ENCODE measurements at regions of chr14 and their contacts with region 1.

Region 1: GRCh38 chr14:35261774-35262173 is 30.4 kb upstream of the PSMA6 start:
- DNase-seq: no peak
- ATAC-seq: peak; percentile 36
- H3K4me3 Mint-ChIP-seq: no peak overlapping the region
- H3K27ac Mint-ChIP-seq: no peak overlapping the region
- H3K4me1 Mint-ChIP-seq: peaks cover 5% of the 10 kb centered on the region
- H3K27me3 Mint-ChIP-seq: no peaks in the 10 kb centered on the region

Region 2: DNA sequence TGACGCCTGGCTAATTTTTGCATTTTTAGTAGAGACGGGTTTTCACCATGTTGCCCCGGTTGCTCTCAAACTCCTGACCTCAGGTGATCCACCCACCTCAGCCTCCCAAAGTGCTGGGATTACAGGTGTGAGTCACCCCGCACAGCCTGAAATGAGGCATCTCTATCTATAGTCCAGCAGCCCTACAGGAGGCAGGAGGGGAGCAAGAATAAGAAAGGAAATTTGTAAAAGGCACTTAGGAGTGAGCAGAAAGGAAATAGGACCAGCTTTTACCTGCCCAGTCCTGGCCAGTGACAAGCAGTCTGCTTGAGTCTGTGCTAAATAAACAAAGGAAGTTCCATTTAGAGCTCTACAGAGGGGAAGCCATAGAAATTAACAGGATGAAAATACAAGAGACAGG is 15.4 kb after region 1 on chr14:
- CTCF ChIA-PET with region 1: interaction called, 4 read pairs
- POLR2A ChIA-PET with region 1: interaction called, 10 read pairs
- intact Hi-C with region 1: no loop called
- DNase-seq: no peak
- ATAC-seq: no peak
- H3K4me3 Mint-ChIP-seq: no peak overlapping the region
- H3K27ac Mint-ChIP-seq: no peak overlapping the region
- H3K4me1 Mint-ChIP-seq: peaks cover 7% of the 10 kb centered on the region
- H3K27me3 Mint-ChIP-seq: no peaks in the 10 kb centered on the region

Region 3: GRCh38 chr14:35341446-35342159 is 79.8 kb after region 1 on chr14:
- CTCF ChIA-PET with region 1: no interaction called
- POLR2A ChIA-PET with region 1: no interaction called
- intact Hi-C with region 1: no loop called
- DNase-seq: peak; percentile 41
- ATAC-seq: peak; percentile 54
- H3K4me3 Mint-ChIP-seq: no peak overlapping the region
- H3K27ac Mint-ChIP-seq: no peak overlapping the region
- H3K4me1 Mint-ChIP-seq: peaks cover 6% of the 10 kb centered on the region
- H3K27me3 Mint-ChIP-seq: no peaks in the 10 kb centered on the region

Region 4: GRCh38 chr14:35480128-35480769 is 218.5 kb after region 1 on chr14:
- CTCF ChIA-PET with region 1: no interaction called
- POLR2A ChIA-PET with region 1: no interaction called
- intact Hi-C with region 1: no loop called
- DNase-seq: peak; percentile 7
- ATAC-seq: peak; percentile 93
- H3K4me3 Mint-ChIP-seq: no peak overlapping the region
- H3K27ac Mint-ChIP-seq: no peak overlapping the region
- H3K4me1 Mint-ChIP-seq: peaks cover 9% of the 10 kb centered on the region
- H3K27me3 Mint-ChIP-seq: peaks cover 16% of the 10 kb centered on the region

Region 5: DNA sequence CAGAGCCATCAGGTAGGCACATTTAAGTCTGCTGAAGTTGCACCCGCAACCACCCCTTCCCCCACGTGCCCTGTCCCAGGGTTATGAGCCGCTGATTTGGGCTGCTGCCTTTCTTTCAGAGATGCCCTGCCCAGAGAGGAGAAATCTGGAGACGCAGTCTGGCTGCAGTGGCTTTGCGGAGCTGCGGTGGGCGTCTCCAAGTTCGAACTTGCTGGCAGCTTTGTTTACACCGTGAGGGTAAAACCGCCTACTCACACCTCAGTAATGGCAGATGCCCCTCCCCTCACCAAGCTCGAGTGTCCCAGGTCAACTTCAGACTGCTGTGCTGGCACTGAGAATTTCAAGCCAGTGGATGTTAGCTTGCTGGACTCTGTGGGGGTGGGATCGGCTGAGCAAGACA is 900.0 kb after region 1 on chr14:
- CTCF ChIA-PET with region 1: no interaction called
- POLR2A ChIA-PET with region 1: no interaction called
- intact Hi-C with region 1: no loop called
- DNase-seq: no peak
- ATAC-seq: no peak
- H3K4me3 Mint-ChIP-seq: no peak overlapping the region
- H3K27ac Mint-ChIP-seq: no peak overlapping the region
- H3K4me1 Mint-ChIP-seq: no peaks in the 10 kb centered on the region
- H3K27me3 Mint-ChIP-seq: peaks cover 15% of the 10 kb centered on the region

Measured in activated CD4-positive, alpha-beta T cell treated with anti-CD3 and anti-CD28 coated beads for 36 hours (primary cell).